ENCODE measurements at regions of chr19 and their contacts with region 1.

Region 1: GRCh38 chr19:40425450-40426287 is at the start of gene SERTAD1:
- DNase-seq: peak; percentile 100
- ATAC-seq: peak; percentile 89
- H3K4me3 ChIP-seq: peak within 1 kb of the TSS; percentile 71 to 89 (median 82)
- H3K4me3 Mint-ChIP-seq: peak within 1 kb of the TSS; percentile 98
- H3K27ac ChIP-seq: peak within 1 kb of the TSS; percentile 84 to 93
- H3K27ac Mint-ChIP-seq: peak within 1 kb of the TSS; percentile 98
- H3K4me1 ChIP-seq: peaks cover 14 to 24% of the 10 kb centered on the region in 2 donors
- H3K4me1 Mint-ChIP-seq: peaks cover 27% of the 10 kb centered on the region
- H3K27me3 ChIP-seq: no peaks in the 10 kb centered on the region
- H3K27me3 Mint-ChIP-seq: no peaks in the 10 kb centered on the region
- CTCF ChIP-seq: peak; percentile 75
- total RNA-seq, gene SERTAD1: 11.9 and 13.6 TPM in 2 replicates

Region 2: GRCh38 chr19:40174092-40174491 is 251.6 kb before region 1 on chr19:
- CTCF ChIA-PET with region 1: no interaction called
- POLR2A ChIA-PET with region 1: no interaction called
- intact Hi-C with region 1: no loop called
- DNase-seq: no peak
- ATAC-seq: no peak
- H3K4me3 ChIP-seq: no peak overlapping the region
- H3K4me3 Mint-ChIP-seq: no peak overlapping the region
- H3K27ac ChIP-seq: no peak overlapping the region
- H3K27ac Mint-ChIP-seq: no peak overlapping the region
- H3K4me1 ChIP-seq: no peaks in the 10 kb centered on the region
- H3K4me1 Mint-ChIP-seq: no peaks in the 10 kb centered on the region
- H3K27me3 ChIP-seq: peaks cover 0 to 2% (median 0%) of the 10 kb centered on the region in 4 experiments
- H3K27me3 Mint-ChIP-seq: peaks cover 23% of the 10 kb centered on the region
- CTCF ChIP-seq: no peak

Region 3: DNA sequence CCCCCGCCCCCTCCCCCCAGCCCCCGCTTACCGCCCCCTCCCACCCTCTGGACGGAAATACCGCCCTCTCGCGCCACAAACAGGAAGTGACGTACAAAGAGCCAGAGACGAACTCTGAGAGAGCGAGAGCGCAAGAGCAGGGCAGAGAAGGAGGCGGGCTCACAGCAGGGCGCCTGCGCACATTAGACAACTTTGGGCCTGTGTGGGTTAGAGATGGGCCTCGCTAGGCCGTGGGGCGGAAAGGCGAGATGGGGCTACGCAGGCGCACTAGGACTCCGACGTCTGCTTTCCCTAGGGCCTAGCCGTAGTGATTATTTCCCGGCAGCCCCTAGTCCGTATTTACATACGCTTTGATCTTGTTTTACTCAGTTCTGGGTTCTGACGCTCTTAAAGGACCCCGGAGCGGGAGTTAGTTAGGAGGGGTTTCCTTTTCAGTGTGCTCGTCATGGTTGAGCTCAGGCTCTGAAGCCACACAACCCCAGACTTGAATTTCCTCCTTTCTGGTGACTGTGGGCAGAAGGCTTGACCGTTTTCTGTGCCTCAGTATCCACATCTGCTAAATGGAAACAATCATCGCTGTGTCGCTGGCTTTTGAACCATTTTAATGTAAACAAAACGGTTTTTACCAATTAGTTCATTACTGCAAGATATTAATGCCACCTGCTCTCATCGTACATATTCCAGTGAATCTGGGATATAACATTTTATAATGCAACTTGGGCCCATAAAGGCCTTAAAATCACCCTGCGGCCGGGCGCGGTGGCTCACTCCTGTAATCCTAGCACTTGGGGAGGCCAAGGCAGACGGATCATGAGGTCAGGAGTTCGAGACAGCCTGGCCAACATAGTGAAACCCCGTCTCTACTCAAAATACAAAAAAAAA is 140.1 kb before region 1 on chr19:
- CTCF ChIA-PET with region 1: interaction called, 3 read pairs
- POLR2A ChIA-PET with region 1: interaction called, 5 read pairs
- intact Hi-C with region 1: loop called (anchors 1 kb)
- DNase-seq: peak; percentile 100
- ATAC-seq: peak; percentile 74
- H3K4me3 ChIP-seq: peak overlapping the region in 4 of 5 experiments; percentile 68 to 89 (median 78)
- H3K4me3 Mint-ChIP-seq: peak overlapping the region; percentile 87
- H3K27ac ChIP-seq: peak overlapping the region; percentile 99 to 100
- H3K27ac Mint-ChIP-seq: peak overlapping the region; percentile 97
- H3K4me1 ChIP-seq: peaks cover 40 to 54% of the 10 kb centered on the region in 2 donors
- H3K4me1 Mint-ChIP-seq: peaks cover 53% of the 10 kb centered on the region
- H3K27me3 ChIP-seq: no peaks in the 10 kb centered on the region
- H3K27me3 Mint-ChIP-seq: no peaks in the 10 kb centered on the region
- CTCF ChIP-seq: no peak

Region 4: DNA sequence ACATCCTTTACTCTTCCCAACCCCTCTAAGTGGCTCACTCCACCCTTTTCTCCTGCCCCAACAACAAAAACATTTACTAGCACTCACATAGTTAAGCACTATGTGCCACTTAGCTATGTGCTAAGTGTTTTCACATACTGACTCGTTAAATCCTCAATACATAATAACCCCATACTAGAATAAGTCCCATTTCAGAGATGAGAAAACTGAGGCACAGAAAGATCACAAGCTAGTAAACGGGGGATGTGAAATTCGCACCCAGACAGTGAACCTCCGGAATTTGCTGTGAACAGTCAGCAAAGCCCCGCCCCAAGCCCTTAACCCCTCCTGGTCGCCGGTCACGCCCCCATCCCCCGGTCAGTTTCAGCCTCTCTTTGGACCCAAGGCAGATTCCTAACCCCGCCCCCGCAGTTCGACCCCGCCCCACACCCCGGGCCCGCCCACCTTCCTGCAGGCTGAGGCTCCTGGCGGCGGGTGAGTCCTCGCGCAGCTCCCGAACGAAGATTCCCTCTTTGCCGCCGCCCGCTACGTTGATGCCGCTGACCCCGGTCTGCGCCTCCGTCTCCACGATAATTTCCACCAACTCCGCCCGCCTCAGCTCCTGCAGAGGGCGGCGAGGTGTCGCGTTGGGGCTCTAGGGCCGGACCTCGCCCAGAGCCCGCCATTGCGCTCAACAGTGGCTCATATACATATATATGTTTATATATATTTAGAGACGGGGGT is 22.2 kb before region 1 on chr19:
- CTCF ChIA-PET with region 1: interaction called, 26 read pairs
- POLR2A ChIA-PET with region 1: interaction called, 5 read pairs
- intact Hi-C with region 1: loop called (anchors 1 kb)
- DNase-seq: peak; percentile 86
- ATAC-seq: peak; percentile 81
- H3K4me3 ChIP-seq: peak overlapping the region; percentile 27 to 84 (median 74)
- H3K4me3 Mint-ChIP-seq: peak overlapping the region; percentile 97
- H3K27ac ChIP-seq: peak overlapping the region; percentile 30 to 49
- H3K27ac Mint-ChIP-seq: peak overlapping the region; percentile 93
- H3K4me1 ChIP-seq: peaks cover 6 to 18% of the 10 kb centered on the region in 2 donors
- H3K4me1 Mint-ChIP-seq: peaks cover 29% of the 10 kb centered on the region
- H3K27me3 ChIP-seq: peaks cover 0 to 6% (median 3%) of the 10 kb centered on the region in 4 experiments
- H3K27me3 Mint-ChIP-seq: peaks cover 8% of the 10 kb centered on the region
- CTCF ChIP-seq: no peak

Region 5: GRCh38 chr19:40465557-40466150 is 40.0 kb after region 1 on chr19 and contains the start of gene BLVRB:
- CTCF ChIA-PET with region 1: interaction called, 86 read pairs
- POLR2A ChIA-PET with region 1: interaction called, 12 read pairs
- intact Hi-C with region 1: loop called (anchors 1 kb)
- DNase-seq: peak; percentile 100
- ATAC-seq: peak; percentile 89
- H3K4me3 ChIP-seq: peak within 1 kb of the TSS; percentile 1 to 70 (median 62)
- H3K4me3 Mint-ChIP-seq: peak within 1 kb of the TSS; percentile 87
- H3K27ac ChIP-seq: peak within 1 kb of the TSS; percentile 38 to 60
- H3K27ac Mint-ChIP-seq: peak within 1 kb of the TSS; percentile 66
- H3K4me1 ChIP-seq: peaks cover 30 to 44% of the 10 kb centered on the region in 2 donors
- H3K4me1 Mint-ChIP-seq: peaks cover 44% of the 10 kb centered on the region
- H3K27me3 ChIP-seq: peaks cover 0 to 23% (median 3%) of the 10 kb centered on the region in 4 experiments
- H3K27me3 Mint-ChIP-seq: peaks cover 12% of the 10 kb centered on the region
- CTCF ChIP-seq: no peak
- total RNA-seq, gene BLVRB: 11.8 and 14.2 TPM in 2 replicates

Region 6: GRCh38 chr19:40529093-40529954 is 103.7 kb after region 1 on chr19:
- CTCF ChIA-PET with region 1: no interaction called
- POLR2A ChIA-PET with region 1: interaction called, 6 read pairs
- intact Hi-C with region 1: loop called (anchors 2 kb)
- DNase-seq: peak; percentile 95
- ATAC-seq: peak; percentile 91
- H3K4me3 ChIP-seq: peak overlapping the region; percentile 9 to 69 (median 41)
- H3K4me3 Mint-ChIP-seq: peak overlapping the region; percentile 82
- H3K27ac ChIP-seq: no peak overlapping the region
- H3K27ac Mint-ChIP-seq: peak overlapping the region; percentile 64
- H3K4me1 ChIP-seq: peaks cover 13 to 14% of the 10 kb centered on the region in 2 donors
- H3K4me1 Mint-ChIP-seq: peaks cover 13% of the 10 kb centered on the region
- H3K27me3 ChIP-seq: peaks cover 0 to 35% (median 18%) of the 10 kb centered on the region in 4 experiments
- H3K27me3 Mint-ChIP-seq: peaks cover 44% of the 10 kb centered on the region
- CTCF ChIP-seq: peak; percentile 91

Region 7: GRCh38 chr19:40598121-40598917 is 172.7 kb after region 1 on chr19:
- CTCF ChIA-PET with region 1: interaction called, 10 read pairs
- POLR2A ChIA-PET with region 1: interaction called, 5 read pairs
- intact Hi-C with region 1: no loop called
- DNase-seq: peak; percentile 87
- ATAC-seq: peak; percentile 60
- H3K4me3 ChIP-seq: no peak overlapping the region
- H3K4me3 Mint-ChIP-seq: peak overlapping the region; percentile 61
- H3K27ac ChIP-seq: no peak overlapping the region
- H3K27ac Mint-ChIP-seq: peak overlapping the region; percentile 32
- H3K4me1 ChIP-seq: peaks cover 59 to 65% of the 10 kb centered on the region in 2 donors
- H3K4me1 Mint-ChIP-seq: peaks cover 45% of the 10 kb centered on the region
- H3K27me3 ChIP-seq: peaks cover 0 to 69% (median 40%) of the 10 kb centered on the region in 4 experiments
- H3K27me3 Mint-ChIP-seq: peaks cover 35% of the 10 kb centered on the region
- CTCF ChIP-seq: peak; percentile 98

Measured in B cell (primary cell).